ENCODE measurements at regions of chr4 and their contacts with region 1.

Region 1: DNA sequence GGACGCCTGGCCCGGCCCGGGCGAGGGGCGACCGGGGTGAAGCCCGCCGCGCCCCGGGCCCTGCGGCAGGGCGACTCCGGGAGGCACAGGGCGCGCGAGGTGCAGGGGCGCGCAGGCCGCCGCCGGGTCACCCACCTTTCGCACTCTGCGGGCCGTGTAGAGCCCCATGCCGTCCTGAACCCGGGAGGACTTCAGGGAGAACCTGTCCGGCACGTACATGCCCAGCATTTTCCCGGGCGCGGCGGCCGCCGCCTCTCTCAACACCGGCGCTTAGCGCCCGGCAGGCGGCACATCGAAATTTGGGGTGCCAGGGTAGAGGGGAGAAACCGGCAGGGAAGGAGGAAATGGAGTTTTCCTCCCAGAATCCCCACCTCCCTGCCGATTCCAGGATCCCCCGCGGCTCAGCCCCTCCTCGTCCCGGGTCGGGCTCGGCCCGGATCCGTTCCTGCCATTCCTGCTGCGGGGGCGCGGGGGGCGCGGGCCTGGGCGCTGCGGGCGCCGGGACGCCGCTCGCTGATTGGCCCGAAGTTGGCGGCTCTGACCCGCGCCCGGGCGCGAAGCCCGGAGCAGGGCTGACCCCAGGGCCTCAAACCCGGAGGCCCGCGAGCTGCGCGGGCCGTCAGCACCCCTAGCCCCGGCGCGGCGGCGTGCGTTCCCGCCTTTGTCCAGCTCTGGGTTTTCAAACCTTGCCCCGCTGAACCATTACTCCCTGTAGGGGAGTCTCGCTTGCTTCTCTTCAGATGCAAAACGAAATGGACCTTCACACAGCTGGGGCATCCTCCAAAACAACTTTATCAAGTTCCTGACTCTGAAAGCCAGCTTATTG is at the start of gene PRDM5:
- DNase-seq: peak; percentile 65
- ATAC-seq: peak; percentile 82 to 88
- H3K4me3 ChIP-seq: peak within 1 kb of the TSS; percentile 72
- H3K27ac ChIP-seq: peak within 1 kb of the TSS; percentile 95
- H3K4me1 ChIP-seq: peaks cover 40% of the 10 kb centered on the region
- H3K27me3 ChIP-seq: no peaks in the 10 kb centered on the region
- CTCF ChIP-seq: peak; percentile 9
- total RNA-seq, gene PRDM5: 14.8 TPM

Region 2: DNA sequence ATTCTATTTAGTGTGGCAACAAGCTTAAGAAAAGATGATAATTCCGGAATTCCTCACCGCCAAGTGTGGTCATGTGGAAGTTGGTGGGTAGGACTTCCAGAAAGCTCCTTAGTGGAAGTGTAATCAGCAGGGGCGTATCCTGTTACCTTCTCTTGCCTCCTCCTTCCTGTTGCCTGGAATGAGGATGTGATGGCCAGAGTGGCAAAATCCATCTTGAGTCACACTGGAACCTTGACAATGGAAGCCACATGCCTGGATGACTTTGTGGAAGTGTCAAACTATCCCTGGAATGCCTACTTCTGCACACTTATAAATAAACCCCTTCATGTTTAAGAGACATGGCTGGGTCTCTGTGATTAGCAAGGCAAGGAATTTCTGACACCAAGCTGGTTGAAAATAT is 191.0 kb before region 1 on chr4:
- intact Hi-C with region 1: no loop called
- DNase-seq: no peak
- ATAC-seq: no peak
- H3K4me3 ChIP-seq: no peak overlapping the region
- H3K27ac ChIP-seq: no peak overlapping the region
- H3K4me1 ChIP-seq: no peaks in the 10 kb centered on the region
- H3K27me3 ChIP-seq: no peaks in the 10 kb centered on the region
- CTCF ChIP-seq: no peak

Region 3: DNA sequence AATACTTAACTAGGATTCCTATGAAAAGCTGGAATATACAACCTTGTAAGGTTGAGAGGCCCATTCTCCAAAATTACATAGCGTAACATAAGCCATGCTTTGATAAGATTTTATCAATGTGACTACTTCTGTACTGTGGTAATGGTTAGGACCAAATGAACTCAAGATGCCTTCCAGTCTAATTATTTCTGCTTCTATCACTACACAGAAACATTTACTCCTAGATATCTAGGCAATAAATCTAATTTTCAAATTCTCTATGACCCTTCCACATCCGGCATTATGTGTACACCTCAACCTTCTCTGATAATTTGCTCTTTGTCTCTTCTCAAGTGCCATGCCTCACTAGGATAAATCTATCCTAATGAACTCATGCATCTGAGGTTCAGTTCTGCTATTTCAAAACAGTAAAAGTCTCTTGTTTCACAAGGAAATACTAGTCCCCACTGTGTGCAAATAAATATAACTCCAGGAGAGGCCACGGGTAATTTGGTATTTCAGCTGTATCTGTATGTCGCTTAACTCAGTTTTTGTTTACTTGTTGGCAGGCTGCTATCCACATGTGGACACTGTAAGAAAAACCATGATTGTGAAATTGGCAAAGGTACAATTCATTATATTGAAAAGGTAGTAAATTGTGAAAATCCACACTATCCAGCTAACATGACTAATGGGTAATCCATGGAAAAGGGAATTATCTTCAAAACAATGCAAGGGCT is 93.3 kb before region 1 on chr4:
- intact Hi-C with region 1: no loop called
- DNase-seq: no peak
- ATAC-seq: no peak
- H3K4me3 ChIP-seq: no peak overlapping the region
- H3K27ac ChIP-seq: no peak overlapping the region
- H3K4me1 ChIP-seq: no peaks in the 10 kb centered on the region
- H3K27me3 ChIP-seq: no peaks in the 10 kb centered on the region
- CTCF ChIP-seq: no peak

Region 4: DNA sequence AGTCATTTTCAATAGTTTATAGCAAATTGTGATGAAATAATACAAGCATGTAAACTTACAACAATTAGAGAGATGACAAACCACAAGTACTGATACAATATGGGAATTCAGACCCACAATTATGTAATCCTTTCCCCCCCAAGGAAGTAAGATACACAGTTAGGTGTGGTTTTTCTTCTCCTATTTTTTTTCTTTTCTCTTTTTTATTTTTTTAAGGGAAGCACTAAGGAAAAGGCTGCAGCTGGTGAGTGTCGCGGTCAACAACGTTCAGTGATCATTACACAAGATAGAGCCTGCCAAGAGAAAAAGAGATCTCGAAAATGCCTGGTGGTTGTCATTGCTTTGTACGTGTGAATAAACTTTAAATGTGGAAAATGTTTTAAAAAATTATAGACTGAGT is 139.9 kb after region 1 on chr4:
- intact Hi-C with region 1: loop called (anchors 10 kb)
- DNase-seq: no peak
- ATAC-seq: peak; percentile 25 to 26
- H3K4me3 ChIP-seq: peak overlapping the region; percentile 15
- H3K27ac ChIP-seq: peak overlapping the region; percentile 39
- H3K4me1 ChIP-seq: peaks cover 51% of the 10 kb centered on the region
- H3K27me3 ChIP-seq: no peaks in the 10 kb centered on the region
- CTCF ChIP-seq: no peak